H1 (cell line): ENCODE measurements at regions of chr11 and their contacts with region 1.

Region 1: DNA sequence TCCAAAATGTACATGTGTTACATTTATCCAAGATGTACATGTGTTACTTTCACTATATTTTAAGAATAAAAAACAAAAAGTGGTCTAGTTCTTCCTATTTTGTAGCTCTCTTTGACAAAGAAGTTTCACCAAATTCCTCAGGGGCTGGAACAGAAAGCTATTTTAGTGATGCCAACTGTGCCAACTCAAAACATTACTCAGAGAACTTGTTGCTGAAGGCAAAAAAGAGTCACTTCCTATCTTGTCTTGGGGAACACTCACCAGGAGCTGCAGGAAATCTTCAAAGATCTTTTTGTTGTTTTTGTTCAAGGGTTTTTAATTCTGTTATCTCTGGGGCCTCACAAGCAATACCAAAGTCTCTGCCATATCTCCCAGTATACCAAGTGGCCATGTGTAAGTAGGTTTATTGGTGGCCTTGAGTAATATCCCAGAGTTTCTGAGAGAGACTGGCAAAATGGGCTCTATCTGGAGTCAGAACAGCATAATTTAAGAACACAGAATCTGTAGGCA is 13.6 kb upstream of the EED start:
- DNase-seq: no peak
- H3K4me3 ChIP-seq: no peak overlapping the region
- H3K27ac ChIP-seq: no peak overlapping the region
- H3K4me1 ChIP-seq: peaks cover 0 to 10% (median 0%) of the 10 kb centered on the region in 4 experiments; a peak in 1 of 7 replicates
- H3K27me3 ChIP-seq: no peaks in the 10 kb centered on the region
- CTCF ChIP-seq: no peak
- EP300 ChIP-seq: no peak
- POLR2A ChIP-seq: no peak
- RAD21 ChIP-seq: no peak

Region 2: GRCh38 chr11:86244522-86245368 is 13.8 kb after region 1 on chr11 and contains the start of gene EED:
- CTCF ChIA-PET with region 1: interaction called, 11 read pairs
- POLR2A ChIA-PET with region 1: interaction called, 15 read pairs
- DNase-seq: peak; percentile 79 to 94
- H3K4me3 ChIP-seq: peak within 1 kb of the TSS; percentile 80 to 96 (median 92)
- H3K27ac ChIP-seq: peak within 1 kb of the TSS; percentile 96
- H3K4me1 ChIP-seq: peaks cover 0 to 8% (median 3%) of the 10 kb centered on the region in 4 experiments; a peak in 5 of 7 replicates
- H3K27me3 ChIP-seq: no peaks in the 10 kb centered on the region
- CTCF ChIP-seq: no peak
- EP300 ChIP-seq: peak in 1 of 2 experiments; percentile 99; a peak in 2 of 3 replicates
- POLR2A ChIP-seq: peak; percentile 85 to 96
- RAD21 ChIP-seq: no peak
- total RNA-seq, gene EED: 26.8 and 26.9 TPM in 2 replicates

Region 3: GRCh38 chr11:86274503-86274902 is 43.5 kb after region 1 on chr11:
- CTCF ChIA-PET with region 1: no interaction called
- POLR2A ChIA-PET with region 1: no interaction called
- DNase-seq: peak in 1 of 2 experiments; percentile 58
- H3K4me3 ChIP-seq: no peak overlapping the region
- H3K27ac ChIP-seq: no peak overlapping the region
- H3K4me1 ChIP-seq: no peaks in the 10 kb centered on the region
- H3K27me3 ChIP-seq: no peaks in the 10 kb centered on the region
- CTCF ChIP-seq: peak; percentile 54 to 75 (median 58)
- EP300 ChIP-seq: no peak
- POLR2A ChIP-seq: no peak
- RAD21 ChIP-seq: peak; percentile 31 to 58; a peak in 3 of 4 replicates